PC-3 (cell line): ENCODE measurements at regions of chr17 and their contacts with region 1.

Region 1: GRCh38 chr17:35119368-35120165 is at the start of gene RAD51D:
- DNase-seq: peak; percentile 72
- ATAC-seq: peak; percentile 86
- H3K4me3 ChIP-seq: peak within 1 kb of the TSS; percentile 87
- H3K27ac ChIP-seq: peak within 1 kb of the TSS; percentile 74
- H3K4me1 ChIP-seq: peaks cover 17% of the 10 kb centered on the region
- H3K27me3 ChIP-seq: no peaks in the 10 kb centered on the region
- CTCF ChIP-seq: peak; percentile 78
- total RNA-seq, gene RAD51D: 10.7 and 16.5 TPM in 2 replicates

Region 2: GRCh38 chr17:34420254-34420766 is 699.3 kb before region 1 on chr17:
- CTCF ChIA-PET with region 1: interaction called, 3 read pairs
- POLR2A ChIA-PET with region 1: no interaction called
- intact Hi-C with region 1: loop called (anchors 5 kb)
- DNase-seq: peak; percentile 68
- ATAC-seq: no peak
- H3K4me3 ChIP-seq: no peak overlapping the region
- H3K27ac ChIP-seq: no peak overlapping the region
- H3K4me1 ChIP-seq: no peaks in the 10 kb centered on the region
- H3K27me3 ChIP-seq: no peaks in the 10 kb centered on the region
- CTCF ChIP-seq: peak; percentile 87

Region 3: DNA sequence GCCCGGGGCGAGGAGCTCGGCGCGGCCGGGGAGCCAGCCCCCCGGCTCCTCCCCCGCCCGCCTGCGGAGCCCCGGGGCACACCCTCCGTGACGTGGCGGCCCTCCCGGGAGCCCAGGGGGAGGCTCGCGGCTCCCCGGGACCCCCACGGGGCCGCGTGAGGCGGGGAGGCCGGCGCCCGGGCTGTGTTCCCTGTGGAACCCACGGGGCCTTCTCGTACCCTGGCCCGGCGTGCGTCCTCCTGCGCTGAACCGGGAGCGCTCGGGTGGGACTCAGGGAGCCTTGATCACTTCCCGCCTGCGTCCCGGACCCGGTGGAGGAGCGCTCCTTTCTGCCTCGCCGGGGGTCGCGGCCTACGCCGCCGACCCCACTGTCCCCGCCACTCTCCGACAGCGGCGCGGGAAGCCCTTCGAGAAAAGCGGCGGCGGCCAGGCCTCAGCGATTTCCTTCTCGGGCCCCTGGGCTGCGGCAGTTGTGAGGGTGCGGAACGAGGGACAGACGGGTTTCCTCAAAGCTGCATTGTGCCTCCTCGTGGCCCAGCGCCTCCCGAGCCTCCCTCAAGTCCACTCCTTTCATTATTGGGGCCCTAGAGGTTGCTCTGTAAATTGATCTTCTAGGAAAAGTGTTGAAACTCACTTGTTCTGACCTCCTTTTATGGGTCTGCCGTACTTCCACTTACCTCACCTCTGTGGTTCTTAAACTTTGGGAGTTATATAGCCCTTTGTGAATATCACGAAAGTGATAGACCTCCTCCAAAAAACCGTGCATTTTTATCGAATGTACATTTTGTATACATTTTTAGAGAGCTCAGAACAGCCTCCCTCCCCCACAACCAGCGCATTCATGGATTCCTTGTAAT is 138.7 kb before region 1 on chr17:
- CTCF ChIA-PET with region 1: no interaction called
- POLR2A ChIA-PET with region 1: no interaction called
- intact Hi-C with region 1: loop called (anchors 5 kb)
- DNase-seq: peak; percentile 60
- ATAC-seq: peak; percentile 84
- H3K4me3 ChIP-seq: peak overlapping the region; percentile 91
- H3K27ac ChIP-seq: peak overlapping the region; percentile 89
- H3K4me1 ChIP-seq: peaks cover 19% of the 10 kb centered on the region
- H3K27me3 ChIP-seq: no peaks in the 10 kb centered on the region
- CTCF ChIP-seq: peak; percentile 51; the same call in 1 of the 2 replicates

Region 4: GRCh38 chr17:34998205-34998604 is 121.4 kb before region 1 on chr17:
- CTCF ChIA-PET with region 1: interaction called, 3 read pairs
- POLR2A ChIA-PET with region 1: no interaction called
- intact Hi-C with region 1: loop called (anchors 2 kb)
- DNase-seq: peak; percentile 66
- ATAC-seq: peak; percentile 80
- H3K4me3 ChIP-seq: no peak overlapping the region
- H3K27ac ChIP-seq: no peak overlapping the region
- H3K4me1 ChIP-seq: peaks cover 13% of the 10 kb centered on the region
- H3K27me3 ChIP-seq: no peaks in the 10 kb centered on the region
- CTCF ChIP-seq: peak; percentile 81

Region 5: GRCh38 chr17:35286120-35286781 is 166.7 kb after region 1 on chr17:
- CTCF ChIA-PET with region 1: no interaction called
- POLR2A ChIA-PET with region 1: no interaction called
- intact Hi-C with region 1: no loop called
- DNase-seq: peak; percentile 2
- ATAC-seq: no peak
- H3K4me3 ChIP-seq: no peak overlapping the region
- H3K27ac ChIP-seq: no peak overlapping the region
- H3K4me1 ChIP-seq: no peaks in the 10 kb centered on the region; the same call in 1 of the 2 replicates
- H3K27me3 ChIP-seq: no peaks in the 10 kb centered on the region
- CTCF ChIP-seq: no peak